ENCODE measurements at regions of chr6 and their contacts with region 1.

Region 1: GRCh38 chr6:36759148-36759759 is 61.6 kb downstream of the RAB44 start:
- H3K4me3 ChIP-seq: no peak overlapping the region
- H3K27ac ChIP-seq: no peak overlapping the region
- H3K4me1 ChIP-seq: no peaks in the 10 kb centered on the region; the same call in 1 of the 2 replicates
- CTCF ChIP-seq: peak; percentile 66

Region 2: DNA sequence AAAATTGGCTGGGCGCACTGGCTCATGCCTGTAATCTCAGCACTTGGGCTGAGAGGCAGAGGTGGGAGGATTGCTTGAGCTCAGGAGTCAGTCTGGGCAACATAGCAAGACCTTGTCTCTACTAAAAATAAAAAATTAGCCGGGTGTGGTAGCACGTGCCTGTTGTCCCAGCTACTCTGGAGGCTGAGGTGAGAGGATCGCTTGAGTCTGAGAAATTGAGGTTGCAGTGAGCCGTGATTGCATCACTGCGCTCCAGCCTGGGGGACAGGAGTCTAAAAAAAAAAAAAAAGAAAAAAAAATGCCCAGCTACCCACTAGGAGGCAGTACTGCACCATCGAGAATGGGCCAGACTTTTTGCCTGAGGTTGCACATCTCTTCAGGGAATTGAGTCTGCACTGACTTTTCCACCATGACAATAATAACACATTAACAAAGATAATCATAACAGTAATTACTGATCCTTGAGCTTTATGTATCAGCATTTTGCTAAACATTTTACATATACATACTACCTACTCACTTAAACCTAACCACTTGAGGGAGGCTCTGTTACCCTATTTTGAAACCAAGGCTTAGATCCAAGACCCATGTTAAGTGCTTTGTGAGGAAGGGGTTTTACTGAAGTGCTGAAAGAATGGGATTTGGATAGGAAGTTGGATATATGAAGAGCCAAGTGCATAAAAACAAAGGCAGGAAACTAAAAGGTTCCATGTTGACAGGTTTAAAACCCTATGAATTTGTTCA is 144.1 kb before region 1 on chr6:
- CTCF ChIA-PET with region 1: interaction called, 156 read pairs
- POLR2A ChIA-PET with region 1: no interaction called
- H3K4me3 ChIP-seq: no peak overlapping the region
- H3K27ac ChIP-seq: no peak overlapping the region
- H3K4me1 ChIP-seq: no peaks in the 10 kb centered on the region
- CTCF ChIP-seq: peak; percentile 83

Region 3: DNA sequence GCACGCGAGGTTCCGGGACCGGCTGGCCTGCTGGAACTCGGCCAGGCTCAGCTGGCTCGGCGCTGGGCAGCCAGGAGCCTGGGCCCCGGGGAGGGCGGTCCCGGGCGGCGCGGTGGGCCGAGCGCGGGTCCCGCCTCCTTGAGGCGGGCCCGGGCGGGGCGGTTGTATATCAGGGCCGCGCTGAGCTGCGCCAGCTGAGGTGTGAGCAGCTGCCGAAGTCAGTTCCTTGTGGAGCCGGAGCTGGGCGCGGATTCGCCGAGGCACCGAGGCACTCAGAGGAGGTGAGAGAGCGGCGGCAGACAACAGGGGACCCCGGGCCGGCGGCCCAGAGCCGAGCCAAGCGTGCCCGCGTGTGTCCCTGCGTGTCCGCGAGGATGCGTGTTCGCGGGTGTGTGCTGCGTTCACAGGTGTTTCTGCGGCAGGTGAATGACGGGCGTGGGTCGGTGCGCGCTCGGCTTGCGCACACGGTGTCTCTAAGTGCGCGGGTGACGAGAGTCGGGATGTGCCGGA is 80.7 kb before region 1 on chr6 and contains the start of gene CDKN1A:
- CTCF ChIA-PET with region 1: interaction called, 14 read pairs
- POLR2A ChIA-PET with region 1: interaction called, 3 read pairs
- H3K4me3 ChIP-seq: peak within 1 kb of the TSS; percentile 76
- H3K27ac ChIP-seq: peak within 1 kb of the TSS; percentile 89
- H3K4me1 ChIP-seq: peaks cover 19% of the 10 kb centered on the region
- CTCF ChIP-seq: 0 out of 2 replicates have a peak, but pooled peaks have one; percentile 7

Region 4: GRCh38 chr6:36724514-36725390 is 34.5 kb before region 1 on chr6:
- CTCF ChIA-PET with region 1: interaction called, 25 read pairs
- POLR2A ChIA-PET with region 1: interaction called, 5 read pairs
- H3K4me3 ChIP-seq: no peak overlapping the region
- H3K27ac ChIP-seq: no peak overlapping the region
- H3K4me1 ChIP-seq: no peaks in the 10 kb centered on the region
- CTCF ChIP-seq: peak; percentile 77

Region 5: GRCh38 chr6:36743538-36744303 is 15.5 kb before region 1 on chr6:
- CTCF ChIA-PET with region 1: interaction called, 47 read pairs
- POLR2A ChIA-PET with region 1: no interaction called
- H3K4me3 ChIP-seq: no peak overlapping the region
- H3K27ac ChIP-seq: no peak overlapping the region
- H3K4me1 ChIP-seq: no peaks in the 10 kb centered on the region
- CTCF ChIP-seq: no peak

Region 6: GRCh38 chr6:36851149-36851614 is 91.9 kb after region 1 on chr6:
- CTCF ChIA-PET with region 1: interaction called, 298 read pairs
- POLR2A ChIA-PET with region 1: no interaction called
- H3K4me3 ChIP-seq: no peak overlapping the region
- H3K27ac ChIP-seq: no peak overlapping the region
- H3K4me1 ChIP-seq: no peaks in the 10 kb centered on the region; the same call in 1 of the 2 replicates
- CTCF ChIP-seq: peak; percentile 40; the same call in 1 of the 2 replicates

Region 7: GRCh38 chr6:37177077-37177934 is 418.1 kb after region 1 on chr6:
- CTCF ChIA-PET with region 1: no interaction called
- POLR2A ChIA-PET with region 1: no interaction called
- H3K4me3 ChIP-seq: no peak overlapping the region
- H3K27ac ChIP-seq: no peak overlapping the region
- H3K4me1 ChIP-seq: no peaks in the 10 kb centered on the region
- CTCF ChIP-seq: no peak